SK-N-SH (cell line): ENCODE measurements at regions of chr11 and their contacts with region 1.

Region 1: DNA sequence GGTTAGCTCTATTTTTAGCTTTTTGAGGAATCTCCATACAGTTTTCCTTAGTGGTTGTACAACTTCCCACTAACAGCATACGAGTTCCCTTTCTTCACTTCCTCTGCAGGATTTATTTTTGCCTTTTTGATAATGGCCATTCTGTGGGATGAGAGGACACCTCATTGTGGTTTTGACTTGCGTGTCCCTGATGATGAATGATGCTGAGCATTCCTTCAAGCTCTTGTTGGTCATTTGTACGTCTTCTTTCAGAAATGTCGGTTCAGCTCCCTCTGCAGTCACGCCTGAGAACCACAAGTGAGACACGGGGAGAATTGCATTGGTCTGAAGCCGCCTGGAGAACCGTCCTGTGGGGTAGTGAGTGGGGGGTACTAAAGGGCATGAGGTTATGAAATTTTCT is 2.0 kb upstream of the KRTAP5-10 start:
- DNase-seq: peak; percentile 65
- H3K4me3 ChIP-seq: no peak overlapping the region
- H3K27ac ChIP-seq: no peak overlapping the region
- H3K4me1 ChIP-seq: peaks cover 0 to 7% of the 10 kb centered on the region in 2 experiments; a peak in 1 of 4 replicates
- H3K27me3 ChIP-seq: no peaks in the 10 kb centered on the region
- CTCF ChIP-seq: no peak; the same call in 1 of the 2 replicates
- EP300 ChIP-seq: no peak
- RAD21 ChIP-seq: peak; percentile 68

Region 2: DNA sequence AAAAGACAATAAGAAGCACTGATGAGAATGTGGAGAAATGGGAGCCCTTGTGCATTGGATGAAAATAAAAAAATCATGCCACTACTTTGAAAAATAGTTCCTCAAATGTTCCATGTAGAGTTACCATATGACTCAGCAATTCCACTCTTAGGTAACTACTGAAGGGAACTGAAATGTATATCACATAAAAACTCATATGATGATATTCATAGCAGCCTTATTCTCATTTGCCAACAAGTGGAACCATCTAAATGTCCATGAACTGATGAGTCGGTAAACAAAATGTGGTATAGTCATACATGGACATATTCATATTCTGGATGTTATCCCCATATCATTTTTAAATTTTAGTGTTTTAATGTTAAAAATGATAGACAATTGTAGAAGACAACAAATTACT is 11.7 kb before region 1 on chr11:
- CTCF ChIA-PET with region 1: interaction called, 11 read pairs
- POLR2A ChIA-PET with region 1: interaction called, 3 read pairs
- DNase-seq: no peak
- H3K4me3 ChIP-seq: no peak overlapping the region
- H3K27ac ChIP-seq: no peak overlapping the region
- H3K4me1 ChIP-seq: no peaks in the 10 kb centered on the region; a peak in 1 of 4 replicates
- H3K27me3 ChIP-seq: no peaks in the 10 kb centered on the region
- CTCF ChIP-seq: no peak
- EP300 ChIP-seq: no peak
- RAD21 ChIP-seq: no peak

Region 3: DNA sequence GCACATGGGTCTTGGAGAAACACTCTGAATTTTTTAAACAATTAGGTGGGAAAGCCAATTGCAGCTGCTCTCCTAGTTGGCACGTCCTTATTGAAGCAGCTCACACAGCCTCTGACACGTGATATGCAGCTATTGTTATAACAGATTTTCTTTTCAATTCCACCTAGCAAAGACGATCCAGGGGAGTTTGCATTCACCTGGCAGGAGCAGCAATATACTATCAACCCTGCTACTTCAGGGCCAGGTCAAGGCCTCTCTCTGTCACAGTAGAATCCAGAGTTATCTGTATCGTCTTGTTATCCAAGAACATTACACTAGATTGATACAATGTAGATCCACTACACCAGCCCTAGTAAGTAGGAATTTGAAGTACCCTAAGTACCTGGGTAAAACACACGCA is 11.0 kb after region 1 on chr11:
- CTCF ChIA-PET with region 1: interaction called, 35 read pairs
- POLR2A ChIA-PET with region 1: no interaction called
- DNase-seq: no peak
- H3K4me3 ChIP-seq: no peak overlapping the region
- H3K27ac ChIP-seq: no peak overlapping the region
- H3K4me1 ChIP-seq: no peaks in the 10 kb centered on the region; a peak in 1 of 4 replicates
- H3K27me3 ChIP-seq: no peaks in the 10 kb centered on the region
- CTCF ChIP-seq: no peak
- EP300 ChIP-seq: no peak
- RAD21 ChIP-seq: no peak

Region 4: GRCh38 chr11:71580057-71581003 is 16.9 kb after region 1 on chr11:
- CTCF ChIA-PET with region 1: interaction called, 35 read pairs
- POLR2A ChIA-PET with region 1: no interaction called
- DNase-seq: peak; percentile 84
- H3K4me3 ChIP-seq: no peak overlapping the region; a peak in 1 of 4 replicates
- H3K27ac ChIP-seq: no peak overlapping the region
- H3K4me1 ChIP-seq: peaks cover 0 to 5% of the 10 kb centered on the region in 2 experiments; a peak in 1 of 4 replicates
- H3K27me3 ChIP-seq: no peaks in the 10 kb centered on the region
- CTCF ChIP-seq: peak; percentile 67
- EP300 ChIP-seq: no peak
- RAD21 ChIP-seq: peak; percentile 31